ENCODE measurements at regions of chr10 and their contacts with region 1.

Region 1: GRCh38 chr10:119725828-119726675 is at the start of gene INPP5F:
- DNase-seq: peak; percentile 99 to 100 (median 100)
- ATAC-seq: peak; percentile 99 to 100 (median 99)
- H3K4me3 ChIP-seq: peak within 1 kb of the TSS; percentile 67 to 98 (median 82)
- H3K27ac ChIP-seq: peak within 1 kb of the TSS; percentile 51 to 99 (median 95)
- H3K4me1 ChIP-seq: peaks cover 0 to 39% (median 23%) of the 10 kb centered on the region in 12 donors
- H3K27me3 ChIP-seq: no peaks in the 10 kb centered on the region
- CTCF ChIP-seq: peak in 10 of 12 donors; percentile 26 to 58 (median 35)
- POLR2A ChIP-seq: peak in 1 of 2 donors; percentile 57
- total RNA-seq, gene INPP5F: 3.9 to 9.9 (median 6.6) TPM

Region 2: DNA sequence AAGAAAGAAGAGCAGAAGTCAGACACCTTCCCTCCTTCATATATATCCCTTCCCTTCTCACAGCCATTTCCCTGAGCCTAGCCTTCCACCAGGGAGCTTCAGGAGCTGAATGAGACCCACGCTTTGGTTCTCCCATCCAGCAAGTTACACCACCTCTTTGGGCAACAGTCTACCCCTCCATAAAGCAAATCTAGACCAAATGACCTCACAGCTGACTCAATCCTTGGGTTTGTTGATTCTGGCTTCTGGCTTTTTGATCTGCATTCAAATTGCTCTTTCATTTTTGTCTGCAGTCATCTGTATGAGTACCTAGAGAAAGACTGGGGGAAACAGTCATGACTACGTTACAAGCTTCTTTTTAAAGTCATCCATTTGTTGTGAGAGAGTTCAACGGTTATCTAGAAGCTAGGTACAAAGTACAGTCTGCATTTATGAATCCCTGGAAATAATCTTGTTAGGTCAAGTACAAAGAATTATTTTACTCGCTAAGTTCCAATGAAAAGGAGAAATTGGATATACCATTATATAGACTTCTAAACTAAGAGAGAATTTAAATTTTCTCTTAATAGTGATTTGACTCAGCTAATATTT is 1765.6 kb before region 1 on chr10:
- intact Hi-C with region 1: no loop called
- DNase-seq: no peak
- ATAC-seq: peak in 3 of 4 donors; percentile 36 to 78 (median 76)
- H3K4me3 ChIP-seq: no peak overlapping the region
- H3K27ac ChIP-seq: no peak overlapping the region
- H3K4me1 ChIP-seq: peaks cover 0 to 7% (median 0%) of the 10 kb centered on the region in 12 donors
- H3K27me3 ChIP-seq: no peaks in the 10 kb centered on the region
- CTCF ChIP-seq: no peak
- POLR2A ChIP-seq: no peak

Region 3: DNA sequence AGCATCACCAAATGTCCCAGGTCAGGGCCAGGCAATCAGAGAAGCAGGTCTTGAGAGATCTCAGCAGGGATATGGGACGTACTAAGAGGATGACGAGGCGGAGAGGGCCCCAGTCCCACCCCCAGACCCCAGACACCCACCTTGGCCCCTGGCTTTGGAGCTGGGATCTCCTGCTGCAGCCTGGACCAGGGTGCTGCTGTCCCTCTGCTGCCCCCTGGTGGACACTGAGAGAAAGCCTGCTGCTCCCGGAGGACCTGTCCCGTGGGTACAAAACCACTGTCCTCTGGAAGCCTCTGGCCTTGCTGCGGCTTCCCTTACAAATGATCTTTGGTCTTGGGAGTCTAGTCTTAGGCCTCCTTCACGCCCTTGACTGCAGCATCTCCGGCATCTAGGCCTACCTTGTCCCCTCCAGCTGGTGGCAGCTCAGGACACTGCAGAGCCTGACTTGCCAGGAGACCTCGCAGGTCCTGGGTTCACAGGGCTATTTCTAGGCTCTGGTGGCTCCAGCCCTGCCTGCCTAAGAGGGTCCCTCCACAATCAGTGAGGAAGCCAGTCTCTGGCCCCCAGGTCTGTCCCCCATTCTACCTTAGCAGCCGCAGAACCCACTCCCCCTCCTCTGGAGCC is 280.6 kb before region 1 on chr10:
- intact Hi-C with region 1: loop called in 1 of 10 experiments (anchors 5 kb)
- DNase-seq: peak; percentile 87 to 91 (median 90)
- ATAC-seq: peak; percentile 55 to 68 (median 66)
- H3K4me3 ChIP-seq: no peak overlapping the region
- H3K27ac ChIP-seq: peak overlapping the region in 7 of 12 donors; percentile 0 to 71 (median 35)
- H3K4me1 ChIP-seq: peaks cover 0 to 42% (median 18%) of the 10 kb centered on the region in 12 donors
- H3K27me3 ChIP-seq: no peaks in the 10 kb centered on the region
- CTCF ChIP-seq: peak; percentile 89 to 99 (median 97)
- POLR2A ChIP-seq: no peak

Region 4: GRCh38 chr10:119596537-119597404 is 129.3 kb before region 1 on chr10 and contains the start of gene TIAL1:
- intact Hi-C with region 1: loop called in 4 of 10 experiments (anchors 2 to 10 kb)
- DNase-seq: peak; percentile 97 to 99 (median 98)
- ATAC-seq: peak; percentile 94 to 97 (median 96)
- H3K4me3 ChIP-seq: peak within 1 kb of the TSS; percentile 66 to 91 (median 88)
- H3K27ac ChIP-seq: peak within 1 kb of the TSS; percentile 94 to 100 (median 99)
- H3K4me1 ChIP-seq: peaks cover 0 to 49% (median 43%) of the 10 kb centered on the region in 12 donors
- H3K27me3 ChIP-seq: no peaks in the 10 kb centered on the region
- CTCF ChIP-seq: no peak
- POLR2A ChIP-seq: peak; percentile 40 to 79
- total RNA-seq, gene TIAL1: 36.9 to 86.3 (median 67.3) TPM

Region 5: GRCh38 chr10:119608316-119609155 is 117.5 kb before region 1 on chr10:
- intact Hi-C with region 1: loop called in 1 of 10 experiments (anchors 10 kb)
- DNase-seq: peak; percentile 27 to 74 (median 46)
- ATAC-seq: peak; percentile 77 to 94 (median 86)
- H3K4me3 ChIP-seq: peak overlapping the region in 2 of 12 donors; percentile 14 to 16
- H3K27ac ChIP-seq: no peak overlapping the region
- H3K4me1 ChIP-seq: peaks cover 0 to 3% (median 0%) of the 10 kb centered on the region in 12 donors
- H3K27me3 ChIP-seq: no peaks in the 10 kb centered on the region
- CTCF ChIP-seq: peak; percentile 37 to 76 (median 63)
- POLR2A ChIP-seq: no peak

Region 6: GRCh38 chr10:119625570-119626280 is 100.3 kb before region 1 on chr10:
- intact Hi-C with region 1: no loop called
- DNase-seq: no peak
- ATAC-seq: no peak
- H3K4me3 ChIP-seq: no peak overlapping the region
- H3K27ac ChIP-seq: no peak overlapping the region
- H3K4me1 ChIP-seq: peaks cover 0 to 4% (median 0%) of the 10 kb centered on the region in 12 donors
- H3K27me3 ChIP-seq: no peaks in the 10 kb centered on the region
- CTCF ChIP-seq: no peak
- POLR2A ChIP-seq: no peak

Region 7: GRCh38 chr10:119872860-119873681 is 147.0 kb after region 1 on chr10:
- intact Hi-C with region 1: loop called in 1 of 10 experiments (anchors 5 kb)
- DNase-seq: peak; percentile 90 to 96 (median 93)
- ATAC-seq: peak; percentile 93 to 98 (median 98)
- H3K4me3 ChIP-seq: peak overlapping the region; percentile 70 to 95 (median 82)
- H3K27ac ChIP-seq: peak overlapping the region; percentile 80 to 98 (median 93)
- H3K4me1 ChIP-seq: peaks cover 4 to 45% (median 20%) of the 10 kb centered on the region in 12 donors
- H3K27me3 ChIP-seq: no peaks in the 10 kb centered on the region
- CTCF ChIP-seq: peak in 1 of 12 donors; percentile 3
- POLR2A ChIP-seq: peak in 1 of 2 donors; percentile 71

Region 8: GRCh38 chr10:119931871-119932270 is 205.8 kb after region 1 on chr10:
- intact Hi-C with region 1: no loop called
- DNase-seq: no peak
- ATAC-seq: no peak
- H3K4me3 ChIP-seq: no peak overlapping the region
- H3K27ac ChIP-seq: no peak overlapping the region
- H3K4me1 ChIP-seq: peaks cover 0 to 10% (median 0%) of the 10 kb centered on the region in 12 donors
- H3K27me3 ChIP-seq: no peaks in the 10 kb centered on the region
- CTCF ChIP-seq: no peak
- POLR2A ChIP-seq: no peak